Sigmoid colon (tissue), 7 donors: ENCODE measurements at regions of chr9 and their contacts with region 1.

Region 1: GRCh38 chr9:113463418-113464285 is at the start of gene RGS3:
- DNase-seq: peak; percentile 84
- H3K4me3 ChIP-seq: peak within 1 kb of the TSS; percentile 41 to 65 (median 60)
- H3K27ac ChIP-seq: peak within 1 kb of the TSS; percentile 79 to 86 (median 82)
- H3K4me1 ChIP-seq: peaks cover 0 to 37% (median 21%) of the 10 kb centered on the region in 4 donors
- H3K27me3 ChIP-seq: no peaks in the 10 kb centered on the region
- CTCF ChIP-seq: no peak
- EP300 ChIP-seq: no peak
- POLR2A ChIP-seq: peak; percentile 29 to 64
- total RNA-seq, gene RGS3: 26.9 to 50.7 (median 42.0) TPM

Region 2: GRCh38 chr9:113564498-113565237 is 101.0 kb after region 1 on chr9:
- intact Hi-C with region 1: loop called (anchors 5 kb)
- DNase-seq: peak; percentile 87
- H3K4me3 ChIP-seq: peak overlapping the region; percentile 33 to 50 (median 48)
- H3K27ac ChIP-seq: peak overlapping the region; percentile 84 to 89 (median 86)
- H3K4me1 ChIP-seq: peaks cover 0 to 68% (median 57%) of the 10 kb centered on the region in 4 donors
- H3K27me3 ChIP-seq: no peaks in the 10 kb centered on the region
- CTCF ChIP-seq: no peak
- EP300 ChIP-seq: no peak
- POLR2A ChIP-seq: peak; percentile 52 to 62